ENCODE measurements at regions of chr2 and their contacts with region 1.

Region 1: DNA sequence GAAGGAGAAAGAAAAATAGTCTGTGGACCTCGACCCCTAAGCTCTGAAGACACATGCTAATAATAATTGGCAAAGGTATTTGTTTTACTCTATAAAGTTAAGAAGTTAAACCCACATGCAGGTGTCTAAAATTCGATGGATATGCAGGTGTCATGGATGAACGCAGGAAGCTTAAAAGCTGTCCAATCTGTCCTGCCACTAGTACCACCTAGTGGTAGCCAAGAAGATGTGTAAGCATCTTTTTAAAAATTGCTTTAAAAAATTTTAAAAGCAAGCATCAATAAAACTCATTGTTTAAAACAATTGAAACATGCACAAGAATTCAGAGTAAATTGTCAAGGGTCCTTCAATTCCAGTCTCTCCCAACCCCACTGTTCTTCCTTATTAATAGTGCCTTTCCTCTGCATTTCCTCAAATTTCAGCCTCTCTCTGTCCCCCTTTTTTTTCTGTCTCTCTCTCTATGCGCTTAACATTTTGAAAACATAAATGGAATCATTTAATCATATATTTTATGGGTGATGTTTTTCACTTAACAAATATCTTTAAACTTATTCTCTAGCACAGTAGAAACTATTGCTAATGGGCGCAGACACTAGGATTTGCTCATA is 30.6 kb upstream of the PPP3R1 start:
- DNase-seq: no peak
- ATAC-seq: peak; percentile 84
- H3K4me3 ChIP-seq: no peak overlapping the region
- H3K27ac ChIP-seq: no peak overlapping the region
- H3K4me1 ChIP-seq: no peaks in the 10 kb centered on the region
- H3K27me3 ChIP-seq: no peaks in the 10 kb centered on the region
- CTCF ChIP-seq: peak; percentile 69 to 77 (median 70); a peak in 5 of 6 replicates
- EP300 ChIP-seq: no peak
- POLR2A ChIP-seq: no peak
- RAD21 ChIP-seq: peak; percentile 84

Region 2: DNA sequence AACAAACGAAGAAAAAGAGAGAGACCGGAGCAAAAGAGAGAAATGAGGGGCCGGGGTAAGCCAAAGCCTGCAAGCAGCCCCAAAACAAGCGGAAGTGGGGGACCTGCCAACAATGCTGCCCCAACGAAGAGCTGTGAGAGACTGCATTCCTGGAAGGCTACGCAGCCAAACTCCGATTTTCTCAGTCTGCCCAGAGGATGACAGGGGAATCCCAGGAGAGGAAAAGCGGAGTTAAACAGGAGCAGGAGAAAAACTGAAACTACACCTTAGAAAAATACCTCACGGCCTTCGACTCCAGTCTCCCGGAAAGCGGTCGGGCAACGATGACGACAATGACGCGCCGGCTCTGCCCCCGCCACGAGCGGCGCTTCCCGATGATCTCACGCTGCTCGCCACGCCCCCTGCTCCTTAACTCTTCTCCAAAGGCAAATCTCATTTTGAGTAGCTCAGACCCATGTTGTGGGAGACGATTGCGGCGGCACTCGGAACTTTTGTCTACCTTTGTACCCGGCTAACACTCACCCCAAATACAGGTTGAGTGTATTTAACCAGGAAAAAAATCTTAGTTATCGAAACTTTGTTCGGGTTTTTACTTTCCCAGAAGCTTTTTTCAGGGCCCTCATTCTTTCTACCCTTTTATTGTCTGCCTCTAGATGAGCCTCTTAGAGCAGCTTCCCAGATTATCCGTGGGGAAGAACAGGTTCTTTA is 220.1 kb before region 1 on chr2 and contains the start of gene C1D:
- CTCF ChIA-PET with region 1: no interaction called
- POLR2A ChIA-PET with region 1: no interaction called
- RAD21 ChIA-PET with region 1: interaction called, 3 read pairs
- SMC1A ChIA-PET with region 1: interaction called, 4 read pairs
- in situ Hi-C with region 1: no loop called
- intact Hi-C with region 1: loop called (anchors 10 kb)
- DNase-seq: peak; percentile 82
- ATAC-seq: peak; percentile 89
- H3K4me3 ChIP-seq: peak within 1 kb of the TSS; percentile 94
- H3K27ac ChIP-seq: peak within 1 kb of the TSS; percentile 88
- H3K4me1 ChIP-seq: peaks cover 5% of the 10 kb centered on the region; the same call in 1 of the 2 replicates
- H3K27me3 ChIP-seq: no peaks in the 10 kb centered on the region
- CTCF ChIP-seq: no peak
- EP300 ChIP-seq: no peak
- POLR2A ChIP-seq: peak; percentile 74
- RAD21 ChIP-seq: no peak
- polyA plus RNA-seq, gene C1D: 150 to 152 TPM

Region 3: DNA sequence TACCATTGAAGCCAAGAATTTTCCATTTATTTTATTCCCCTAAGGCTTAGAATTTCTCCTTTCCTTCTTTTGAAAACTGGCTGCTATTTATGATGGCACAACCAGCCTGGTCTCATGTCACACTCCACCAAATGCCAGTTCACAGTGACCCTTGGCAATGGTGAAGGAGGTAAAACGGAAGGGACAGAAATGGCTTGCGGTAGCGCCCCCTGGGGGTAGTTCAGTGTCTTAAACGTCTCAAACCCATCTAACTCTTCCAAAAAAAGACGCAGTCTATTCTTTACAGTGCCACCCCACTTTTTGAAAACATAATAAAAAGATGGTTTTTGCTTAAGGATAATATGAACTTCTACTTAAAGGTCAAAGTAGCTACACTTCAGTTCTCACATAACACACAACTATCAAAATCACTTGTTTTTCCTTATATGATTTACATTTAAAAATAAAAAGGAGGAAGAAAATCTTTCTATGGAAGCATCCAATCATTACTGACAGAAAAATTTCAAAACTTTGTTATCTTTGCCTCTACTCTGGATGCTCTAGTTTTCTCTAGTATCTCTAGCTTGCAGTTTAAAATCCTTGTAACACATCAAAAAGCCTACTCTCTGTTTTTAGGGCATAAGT is 97.3 kb before region 1 on chr2:
- CTCF ChIA-PET with region 1: interaction called, 7 read pairs
- POLR2A ChIA-PET with region 1: no interaction called
- RAD21 ChIA-PET with region 1: interaction called, 3 read pairs
- SMC1A ChIA-PET with region 1: interaction called, 16 read pairs
- in situ Hi-C with region 1: no loop called
- intact Hi-C with region 1: no loop called
- DNase-seq: peak; percentile 28
- ATAC-seq: peak; percentile 94
- H3K4me3 ChIP-seq: no peak overlapping the region
- H3K27ac ChIP-seq: no peak overlapping the region; the same call in 1 of the 2 replicates
- H3K4me1 ChIP-seq: no peaks in the 10 kb centered on the region
- H3K27me3 ChIP-seq: no peaks in the 10 kb centered on the region
- CTCF ChIP-seq: peak; percentile 55 to 80 (median 80)
- EP300 ChIP-seq: no peak
- POLR2A ChIP-seq: no peak
- RAD21 ChIP-seq: peak; percentile 49

Region 4: DNA sequence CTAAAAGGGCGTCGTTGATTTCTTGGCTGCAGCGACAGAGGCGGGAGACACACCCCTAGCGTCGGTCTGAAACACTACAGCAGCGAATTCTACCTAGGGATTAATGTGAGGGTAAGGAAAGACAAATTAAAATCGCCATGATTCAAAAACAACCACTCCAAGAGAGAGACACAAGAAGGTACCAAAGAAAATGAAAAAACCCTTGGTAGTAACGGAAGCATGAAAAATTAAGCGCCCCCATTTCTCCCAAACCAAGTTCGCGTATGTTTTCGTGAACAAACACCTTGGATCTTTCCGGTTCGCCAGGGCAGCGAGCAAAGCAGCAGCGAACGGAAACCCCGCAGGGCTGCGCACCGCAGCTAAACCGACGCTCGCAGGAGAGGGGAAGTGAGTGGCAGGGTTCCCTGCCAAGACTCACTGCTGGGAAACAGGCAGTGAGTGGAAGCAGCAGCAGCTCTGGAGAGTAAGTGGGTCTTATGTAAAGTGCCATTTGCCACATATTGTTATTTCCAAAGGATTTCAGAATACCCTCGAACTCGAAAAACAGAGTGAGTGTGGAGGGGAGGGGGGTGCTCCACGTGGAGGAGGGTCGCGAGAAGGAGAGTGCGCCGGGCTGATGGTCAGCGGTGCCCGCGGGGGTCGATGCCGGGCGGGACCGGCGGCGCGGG is 31.6 kb before region 1 on chr2:
- CTCF ChIA-PET with region 1: interaction called, 12 read pairs
- POLR2A ChIA-PET with region 1: interaction called, 5 read pairs
- RAD21 ChIA-PET with region 1: interaction called, 7 read pairs
- SMC1A ChIA-PET with region 1: interaction called, 3 read pairs
- in situ Hi-C with region 1: no loop called
- intact Hi-C with region 1: no loop called
- DNase-seq: peak; percentile 64
- ATAC-seq: peak; percentile 70
- H3K4me3 ChIP-seq: peak overlapping the region; percentile 85
- H3K27ac ChIP-seq: peak overlapping the region; percentile 91
- H3K4me1 ChIP-seq: peaks cover 18% of the 10 kb centered on the region
- H3K27me3 ChIP-seq: no peaks in the 10 kb centered on the region
- CTCF ChIP-seq: peak; percentile 70 to 79 (median 76)
- EP300 ChIP-seq: no peak
- POLR2A ChIP-seq: no peak; the same call in 1 of the 2 replicates
- RAD21 ChIP-seq: peak; percentile 71

Region 5: DNA sequence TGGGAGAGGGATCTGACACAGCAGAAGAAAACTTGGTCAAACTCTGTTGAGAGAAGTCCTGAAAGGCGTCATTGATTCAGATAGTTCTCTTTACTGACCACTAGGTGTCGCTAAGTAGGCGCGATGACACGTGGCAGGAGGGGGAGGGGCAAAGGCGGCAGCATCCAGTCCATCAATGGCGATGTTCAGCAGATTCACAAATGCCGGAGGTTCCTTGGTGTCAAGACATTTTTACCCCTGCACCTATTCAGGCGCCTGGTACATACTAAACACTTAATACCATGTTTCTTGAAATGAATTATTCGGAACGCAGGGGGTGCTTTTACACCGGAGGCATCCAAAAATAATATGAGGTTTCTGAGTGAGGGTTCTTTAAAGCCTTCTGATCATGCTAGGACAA is 79.2 kb after region 1 on chr2:
- CTCF ChIA-PET with region 1: interaction called, 10 read pairs
- POLR2A ChIA-PET with region 1: interaction called, 5 read pairs
- RAD21 ChIA-PET with region 1: interaction called, 5 read pairs
- SMC1A ChIA-PET with region 1: interaction called, 7 read pairs
- in situ Hi-C with region 1: no loop called
- intact Hi-C with region 1: no loop called
- DNase-seq: peak; percentile 78
- ATAC-seq: peak; percentile 54
- H3K4me3 ChIP-seq: peak overlapping the region; percentile 33; the same call in 1 of the 2 replicates
- H3K27ac ChIP-seq: peak overlapping the region; percentile 94
- H3K4me1 ChIP-seq: peaks cover 21% of the 10 kb centered on the region
- H3K27me3 ChIP-seq: no peaks in the 10 kb centered on the region
- CTCF ChIP-seq: peak; percentile 75 to 92 (median 81)
- EP300 ChIP-seq: peak; percentile 34 to 68; a peak in 1 of 4 replicates
- POLR2A ChIP-seq: peak; percentile 68
- RAD21 ChIP-seq: peak; percentile 97

Region 6: GRCh38 chr2:68372485-68372884 is 89.6 kb after region 1 on chr2:
- CTCF ChIA-PET with region 1: no interaction called
- POLR2A ChIA-PET with region 1: no interaction called
- RAD21 ChIA-PET with region 1: no interaction called
- SMC1A ChIA-PET with region 1: no interaction called
- in situ Hi-C with region 1: no loop called
- intact Hi-C with region 1: no loop called
- DNase-seq: no peak
- ATAC-seq: peak; percentile 2
- H3K4me3 ChIP-seq: peak overlapping the region; percentile 64
- H3K27ac ChIP-seq: peak overlapping the region; percentile 32
- H3K4me1 ChIP-seq: peaks cover 22% of the 10 kb centered on the region
- H3K27me3 ChIP-seq: no peaks in the 10 kb centered on the region
- CTCF ChIP-seq: no peak
- EP300 ChIP-seq: 0 out of 4 replicates have a peak, but pooled peaks of 1 of the 2 experiments have one; percentile 19
- POLR2A ChIP-seq: no peak
- RAD21 ChIP-seq: no peak

Region 7: DNA sequence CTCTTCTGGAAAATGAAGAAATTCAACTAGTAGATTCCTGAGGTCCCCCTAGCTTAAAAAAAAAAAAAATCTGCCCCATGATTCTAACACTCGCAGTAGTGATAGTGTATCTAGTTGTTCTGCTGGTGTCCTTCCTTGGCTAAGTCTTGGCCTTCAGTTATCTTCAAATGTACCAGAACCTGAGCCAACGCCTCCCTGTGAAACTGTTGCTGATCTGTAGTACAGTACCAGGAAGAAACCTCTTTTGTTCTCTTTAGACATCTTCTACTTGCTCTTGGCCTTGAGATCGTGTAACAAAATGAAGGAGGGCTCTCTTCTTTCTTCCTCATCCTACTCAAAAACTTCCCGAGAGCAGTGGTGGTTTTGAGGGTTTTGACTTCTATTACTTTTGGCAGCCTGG is 113.2 kb after region 1 on chr2:
- CTCF ChIA-PET with region 1: no interaction called
- POLR2A ChIA-PET with region 1: no interaction called
- RAD21 ChIA-PET with region 1: no interaction called
- SMC1A ChIA-PET with region 1: no interaction called
- in situ Hi-C with region 1: no loop called
- intact Hi-C with region 1: no loop called
- DNase-seq: no peak
- ATAC-seq: no peak; the same call in 2 of the 3 replicates
- H3K4me3 ChIP-seq: no peak overlapping the region
- H3K27ac ChIP-seq: no peak overlapping the region
- H3K4me1 ChIP-seq: no peaks in the 10 kb centered on the region; the same call in 1 of the 2 replicates
- H3K27me3 ChIP-seq: no peaks in the 10 kb centered on the region
- CTCF ChIP-seq: no peak
- EP300 ChIP-seq: no peak
- POLR2A ChIP-seq: no peak
- RAD21 ChIP-seq: no peak